ENCODE measurements at regions of chr1 and their contacts with region 1.

Region 1: DNA sequence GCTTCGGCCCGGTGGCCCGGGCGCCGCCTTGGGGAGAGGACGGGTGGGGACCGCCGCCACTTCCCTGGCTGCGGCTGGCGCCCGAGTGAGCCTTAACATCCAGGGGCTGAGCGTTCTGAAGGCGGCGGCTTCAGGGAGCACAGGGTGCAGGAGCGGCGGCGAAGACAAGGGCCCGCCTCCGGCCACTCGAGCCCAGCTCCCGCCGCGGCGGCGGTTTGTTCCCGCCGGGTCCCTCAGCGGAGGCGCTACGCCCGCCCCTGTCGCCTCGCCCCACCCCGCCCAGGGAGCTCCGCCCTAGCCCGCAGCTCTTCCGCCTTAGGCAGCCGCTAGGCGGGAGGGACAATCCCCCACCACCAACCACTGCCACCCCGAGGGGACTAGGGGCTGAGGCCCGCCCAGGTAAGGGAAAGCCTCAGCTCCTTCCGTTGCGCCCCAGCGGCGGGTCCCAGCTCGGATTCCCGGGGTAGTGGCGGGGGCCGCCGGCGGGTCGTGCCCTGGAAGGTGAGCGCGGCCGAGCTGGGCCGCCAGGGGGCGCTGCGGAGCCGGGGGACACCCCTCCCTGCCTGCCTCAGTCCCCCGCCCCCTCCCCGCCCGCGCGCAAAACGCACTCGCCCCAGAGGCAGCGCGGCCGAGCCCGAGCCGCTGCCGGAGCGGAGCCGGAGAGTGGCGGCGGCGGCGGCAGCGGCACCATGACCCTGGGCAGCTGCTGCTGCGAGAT is at the start of gene FOXD2:
- DNase-seq: peak; percentile 95
- ATAC-seq: peak; percentile 88
- H3K4me3 Mint-ChIP-seq: peak within 1 kb of the TSS; percentile 95
- H3K27ac Mint-ChIP-seq: peak within 1 kb of the TSS; percentile 93
- H3K4me1 Mint-ChIP-seq: peaks cover 30% of the 10 kb centered on the region
- H3K27me3 Mint-ChIP-seq: peaks cover 15% of the 10 kb centered on the region
- total RNA-seq, gene FOXD2: 0.23 to 0.53 TPM

Region 2: DNA sequence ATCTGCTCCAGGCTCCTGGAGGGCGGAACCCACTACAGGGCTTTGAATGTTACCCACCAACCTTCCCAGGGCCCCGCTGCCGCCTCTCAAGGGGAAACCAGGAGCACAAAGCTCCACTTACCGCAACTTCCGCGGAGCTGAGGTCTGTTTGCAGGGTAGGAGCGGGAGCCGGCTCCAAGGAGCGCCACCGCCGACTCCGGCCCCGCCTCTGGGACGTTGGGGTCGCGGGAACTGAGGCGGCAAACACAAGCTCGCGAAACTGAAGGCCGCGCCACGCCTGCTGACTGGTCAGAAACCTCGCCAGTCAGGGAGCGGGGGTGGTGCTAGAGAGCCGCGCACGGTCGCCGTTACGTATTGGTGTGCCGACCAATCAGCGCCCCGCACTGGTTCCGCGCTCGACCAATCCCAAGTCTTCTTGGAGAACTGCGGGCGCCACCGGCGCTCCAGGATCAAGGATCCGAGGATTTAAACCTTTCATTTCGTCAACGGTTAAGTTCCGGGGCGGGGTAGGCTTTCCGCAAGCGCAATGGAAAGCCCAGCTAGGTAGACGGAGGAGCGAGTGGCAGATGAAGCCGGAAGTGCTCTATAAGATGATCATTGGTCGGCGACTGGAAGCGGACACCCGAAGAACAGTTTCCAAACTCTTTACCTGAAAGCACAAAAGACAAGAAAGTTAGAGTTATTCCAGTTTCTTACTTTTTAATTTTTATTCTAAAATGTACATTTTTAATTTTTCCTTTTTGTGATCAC is 123.5 kb before region 1 on chr1 and contains the start of gene STIL:
- CTCF ChIA-PET with region 1: interaction called, 11 read pairs
- DNase-seq: peak; percentile 99
- ATAC-seq: peak; percentile 97
- H3K4me3 Mint-ChIP-seq: peak within 1 kb of the TSS; percentile 95
- H3K27ac Mint-ChIP-seq: peak within 1 kb of the TSS; percentile 94
- H3K4me1 Mint-ChIP-seq: peaks cover 31% of the 10 kb centered on the region
- H3K27me3 Mint-ChIP-seq: no peaks in the 10 kb centered on the region
- total RNA-seq, gene STIL: 38.6 to 51.3 TPM

Region 3: DNA sequence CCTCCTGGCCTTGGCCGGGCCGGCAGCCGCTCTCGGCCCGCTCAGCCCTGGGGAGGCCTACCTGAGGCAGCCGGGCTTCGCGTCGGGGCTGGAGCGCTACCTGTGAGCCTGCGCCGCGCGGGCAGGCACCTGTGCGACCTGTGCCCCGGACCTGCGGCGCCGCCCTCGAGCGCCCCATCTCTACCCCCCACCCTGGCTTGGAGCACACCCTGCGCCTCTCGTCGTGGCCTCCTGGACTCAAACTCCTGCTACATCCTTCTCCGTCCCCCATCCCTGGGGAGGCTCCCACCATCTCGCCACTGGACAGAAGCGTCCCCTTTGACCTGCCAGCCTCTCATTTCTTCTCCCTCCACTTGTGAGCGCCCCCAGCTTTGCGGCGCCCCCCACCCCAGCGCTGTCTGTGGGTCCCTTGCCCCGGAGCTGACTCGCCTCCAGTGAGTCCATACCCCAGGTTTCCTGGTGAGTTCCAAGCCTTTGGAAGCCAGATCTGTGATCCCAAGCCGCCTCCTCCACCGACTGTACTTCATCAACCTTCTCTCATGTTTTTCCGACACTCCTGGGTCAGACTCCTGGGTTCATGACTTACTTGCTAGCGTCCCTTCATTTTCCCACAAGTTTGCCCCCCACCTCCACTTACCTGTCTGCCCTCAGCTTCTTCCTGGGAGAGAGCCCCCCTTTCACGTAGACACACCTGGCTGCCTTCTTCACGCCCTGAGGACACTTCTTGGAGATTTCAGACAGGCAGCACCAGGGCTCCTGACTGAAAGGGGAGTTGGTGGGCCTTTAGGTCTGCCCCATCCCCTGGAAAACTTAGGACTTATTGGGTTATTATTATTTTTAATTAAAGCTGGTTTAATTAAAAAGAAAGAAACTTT is 20.2 kb before region 1 on chr1:
- CTCF ChIA-PET with region 1: interaction called, 30 read pairs
- DNase-seq: no peak
- ATAC-seq: no peak
- H3K4me3 Mint-ChIP-seq: no peak overlapping the region
- H3K27ac Mint-ChIP-seq: no peak overlapping the region
- H3K4me1 Mint-ChIP-seq: peaks cover 7% of the 10 kb centered on the region
- H3K27me3 Mint-ChIP-seq: peaks cover 53% of the 10 kb centered on the region

Region 4: GRCh38 chr1:47703981-47704596 is 266.5 kb after region 1 on chr1:
- CTCF ChIA-PET with region 1: interaction called, 83 read pairs
- DNase-seq: no peak
- ATAC-seq: no peak
- H3K4me3 Mint-ChIP-seq: no peak overlapping the region
- H3K27ac Mint-ChIP-seq: no peak overlapping the region
- H3K4me1 Mint-ChIP-seq: peaks cover 1% of the 10 kb centered on the region
- H3K27me3 Mint-ChIP-seq: peaks cover 29% of the 10 kb centered on the region

Region 5: GRCh38 chr1:47720111-47720510 is 282.5 kb after region 1 on chr1:
- CTCF ChIA-PET with region 1: interaction called, 10 read pairs
- DNase-seq: peak; percentile 9
- ATAC-seq: no peak
- H3K4me3 Mint-ChIP-seq: no peak overlapping the region
- H3K27ac Mint-ChIP-seq: no peak overlapping the region
- H3K4me1 Mint-ChIP-seq: no peaks in the 10 kb centered on the region
- H3K27me3 Mint-ChIP-seq: peaks cover 55% of the 10 kb centered on the region

Measured in activated CD8-positive, alpha-beta memory T cell treated with anti-CD3 and anti-CD28 coated beads, Interleukin-2, amount 10 ng/mL, durations not matched to agents 7 days and 5 days (primary cell).